ENCODE measurements at regions of chr14 and their contacts with region 1.

Region 1: GRCh38 chr14:21092273-21093011 is 6.0 kb downstream of the ZNF219 start:
- DNase-seq: peak; percentile 94
- ATAC-seq: peak; percentile 97
- H3K4me3 Mint-ChIP-seq: no peak overlapping the region
- H3K27ac Mint-ChIP-seq: no peak overlapping the region
- H3K4me1 Mint-ChIP-seq: peaks cover 15% of the 10 kb centered on the region
- H3K27me3 Mint-ChIP-seq: no peaks in the 10 kb centered on the region
- CTCF ChIP-seq: peak; percentile 100

Region 2: GRCh38 chr14:20934148-20934762 is 158.2 kb before region 1 on chr14:
- CTCF ChIA-PET with region 1: no interaction called
- POLR2A ChIA-PET with region 1: no interaction called
- intact Hi-C with region 1: no loop called
- DNase-seq: peak; percentile 65
- ATAC-seq: no peak
- H3K4me3 Mint-ChIP-seq: no peak overlapping the region
- H3K27ac Mint-ChIP-seq: no peak overlapping the region
- H3K4me1 Mint-ChIP-seq: no peaks in the 10 kb centered on the region
- H3K27me3 Mint-ChIP-seq: peaks cover 2% of the 10 kb centered on the region
- CTCF ChIP-seq: peak; percentile 76

Region 3: GRCh38 chr14:21003788-21004346 is 88.6 kb before region 1 on chr14:
- CTCF ChIA-PET with region 1: interaction called, 10 read pairs
- POLR2A ChIA-PET with region 1: interaction called, 4 read pairs
- intact Hi-C with region 1: no loop called
- DNase-seq: no peak
- ATAC-seq: no peak
- H3K4me3 Mint-ChIP-seq: no peak overlapping the region
- H3K27ac Mint-ChIP-seq: no peak overlapping the region
- H3K4me1 Mint-ChIP-seq: no peaks in the 10 kb centered on the region
- H3K27me3 Mint-ChIP-seq: no peaks in the 10 kb centered on the region
- CTCF ChIP-seq: no peak

Region 4: GRCh38 chr14:21049271-21049673 is 43.2 kb before region 1 on chr14:
- CTCF ChIA-PET with region 1: interaction called, 12 read pairs
- POLR2A ChIA-PET with region 1: no interaction called
- intact Hi-C with region 1: no loop called
- DNase-seq: no peak
- ATAC-seq: no peak
- H3K4me3 Mint-ChIP-seq: no peak overlapping the region
- H3K27ac Mint-ChIP-seq: no peak overlapping the region
- H3K4me1 Mint-ChIP-seq: peaks cover 4% of the 10 kb centered on the region
- H3K27me3 Mint-ChIP-seq: peaks cover 1% of the 10 kb centered on the region
- CTCF ChIP-seq: no peak

Region 5: DNA sequence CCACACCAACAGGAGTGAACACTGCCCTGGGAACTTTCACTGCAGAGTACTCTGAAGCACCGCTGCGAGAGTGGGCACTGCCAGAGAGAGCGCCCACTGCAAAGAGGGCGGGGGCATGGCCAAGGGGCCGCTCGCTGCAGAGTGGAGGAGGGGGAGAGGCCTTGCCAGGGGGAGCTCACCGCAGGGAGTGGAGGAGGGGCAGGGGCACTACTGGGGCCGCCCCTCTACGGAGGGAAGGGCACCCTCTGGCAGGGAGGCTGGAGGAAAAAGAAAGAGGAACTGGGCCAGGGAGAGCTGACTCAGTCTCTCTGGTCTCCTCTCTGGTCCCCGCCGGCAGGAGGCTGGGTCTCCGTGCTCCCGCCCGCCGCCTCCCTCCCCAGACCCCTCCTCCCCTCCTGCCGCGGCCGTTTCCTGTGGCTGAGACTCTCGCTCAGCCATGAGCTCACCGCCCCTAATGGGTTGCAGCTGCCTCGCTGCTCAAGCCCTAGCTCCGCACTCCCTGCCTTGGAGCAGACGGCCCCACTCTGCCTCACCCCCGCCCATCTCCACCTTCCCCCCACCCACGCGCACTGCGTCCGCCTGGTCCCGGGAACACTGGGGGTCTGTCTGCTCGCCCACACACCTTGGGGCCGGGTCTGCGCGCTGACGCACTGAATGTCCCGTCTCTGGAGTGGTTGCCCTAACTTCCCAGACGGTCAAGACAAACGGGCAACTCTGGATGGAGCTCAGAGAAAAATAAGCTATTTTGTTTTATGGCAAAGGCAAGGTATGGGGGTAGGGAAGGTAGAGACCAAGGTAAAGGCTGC is 21.0 kb before region 1 on chr14:
- CTCF ChIA-PET with region 1: interaction called, 120 read pairs
- POLR2A ChIA-PET with region 1: interaction called, 8 read pairs
- intact Hi-C with region 1: no loop called
- DNase-seq: peak; percentile 76
- ATAC-seq: peak; percentile 76
- H3K4me3 Mint-ChIP-seq: peak overlapping the region; percentile 69
- H3K27ac Mint-ChIP-seq: no peak overlapping the region
- H3K4me1 Mint-ChIP-seq: peaks cover 31% of the 10 kb centered on the region
- H3K27me3 Mint-ChIP-seq: peaks cover 56% of the 10 kb centered on the region
- CTCF ChIP-seq: no peak

Region 6: DNA sequence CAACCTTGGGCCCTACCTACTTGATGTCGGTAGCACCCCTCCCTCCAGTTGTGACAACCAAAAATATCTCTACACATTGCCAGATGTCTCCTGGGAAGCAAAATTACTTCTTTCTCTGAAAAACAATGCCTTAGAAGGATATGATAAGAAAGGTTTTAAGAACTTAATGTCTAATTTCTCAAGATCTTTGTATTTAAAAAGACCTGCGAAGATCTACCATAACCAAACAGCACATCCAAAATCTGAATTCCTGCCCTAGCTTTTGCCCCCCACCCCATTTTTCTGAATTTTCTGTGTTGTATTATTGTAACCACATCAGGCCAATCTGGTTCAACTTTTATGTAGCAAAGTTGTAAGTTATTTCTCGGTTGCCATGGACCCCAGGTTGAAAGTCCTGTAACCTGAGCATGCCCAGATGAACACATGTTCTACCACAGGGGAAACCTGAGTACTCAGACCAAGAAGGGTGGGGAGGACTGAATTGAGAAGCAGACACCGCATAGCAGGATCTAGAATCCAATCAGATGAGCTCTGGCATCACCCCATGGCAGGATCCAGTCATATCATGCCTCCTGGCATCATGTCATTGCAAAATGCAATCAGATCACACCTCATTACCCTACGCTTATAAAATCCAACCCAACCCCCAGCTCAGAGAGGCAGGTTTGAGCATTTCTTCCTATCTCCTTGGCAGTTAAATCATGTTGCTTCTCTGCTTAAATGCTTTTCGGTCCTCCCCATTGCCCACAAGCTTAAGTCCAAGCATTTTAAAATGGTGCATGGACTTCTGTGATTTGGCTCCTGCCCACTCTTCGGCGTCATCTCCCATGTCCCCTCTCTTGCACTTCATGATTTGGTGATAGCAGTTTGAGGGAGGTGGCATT is 17.2 kb after region 1 on chr14:
- CTCF ChIA-PET with region 1: interaction called, 187 read pairs
- POLR2A ChIA-PET with region 1: interaction called, 30 read pairs
- intact Hi-C with region 1: no loop called
- DNase-seq: peak; percentile 57
- ATAC-seq: peak; percentile 83
- H3K4me3 Mint-ChIP-seq: no peak overlapping the region
- H3K27ac Mint-ChIP-seq: no peak overlapping the region
- H3K4me1 Mint-ChIP-seq: peaks cover 16% of the 10 kb centered on the region
- H3K27me3 Mint-ChIP-seq: no peaks in the 10 kb centered on the region
- CTCF ChIP-seq: no peak

Region 7: DNA sequence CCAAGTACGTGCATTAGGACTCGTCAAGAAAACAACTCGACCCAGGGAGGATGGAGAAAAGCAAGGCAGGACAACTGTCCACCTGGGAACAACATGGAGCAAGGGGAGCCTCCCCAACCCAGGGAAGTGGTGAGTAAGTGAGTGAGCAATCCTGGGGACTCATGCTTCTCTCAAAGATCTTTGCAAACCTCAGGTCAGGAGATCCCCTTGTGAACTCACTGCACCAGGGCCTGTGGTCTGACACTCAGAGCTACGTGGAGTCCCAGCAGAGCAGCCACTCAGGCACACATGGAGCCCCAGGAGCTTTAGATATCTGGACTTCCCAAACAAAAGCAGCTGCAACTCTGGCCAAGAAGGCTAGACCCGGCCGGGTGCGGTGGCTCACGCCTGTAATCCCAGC is 75.6 kb after region 1 on chr14:
- CTCF ChIA-PET with region 1: no interaction called
- POLR2A ChIA-PET with region 1: no interaction called
- intact Hi-C with region 1: no loop called
- DNase-seq: peak; percentile 11
- ATAC-seq: peak; percentile 24
- H3K4me3 Mint-ChIP-seq: no peak overlapping the region
- H3K27ac Mint-ChIP-seq: no peak overlapping the region
- H3K4me1 Mint-ChIP-seq: no peaks in the 10 kb centered on the region
- H3K27me3 Mint-ChIP-seq: peaks cover 14% of the 10 kb centered on the region
- CTCF ChIP-seq: no peak

Region 8: GRCh38 chr14:22002860-22003309 is 910.4 kb after region 1 on chr14:
- CTCF ChIA-PET with region 1: no interaction called
- POLR2A ChIA-PET with region 1: no interaction called
- intact Hi-C with region 1: no loop called
- DNase-seq: peak; percentile 86
- ATAC-seq: peak; percentile 79
- H3K4me3 Mint-ChIP-seq: peak overlapping the region; percentile 81
- H3K27ac Mint-ChIP-seq: peak overlapping the region; percentile 92
- H3K4me1 Mint-ChIP-seq: peaks cover 17% of the 10 kb centered on the region
- H3K27me3 Mint-ChIP-seq: no peaks in the 10 kb centered on the region
- CTCF ChIP-seq: peak; percentile 58